Dendritic cell treated with granulocyte-macrophage colony-stimulating factor and Interleukin-4, amounts not matched to agents 40 ng/mL and 50 ng/mL, for 4 days (primary cell): ENCODE measurements at regions of chr9 and their contacts with region 1.

Region 1: GRCh38 chr9:15416880-15417279 is 5.8 kb upstream of the SNAPC3 start:
- H3K4me3 Mint-ChIP-seq: no peak overlapping the region
- H3K27ac Mint-ChIP-seq: no peak overlapping the region
- H3K4me1 Mint-ChIP-seq: no peaks in the 10 kb centered on the region
- H3K27me3 Mint-ChIP-seq: no peaks in the 10 kb centered on the region

Region 2: GRCh38 chr9:15211160-15211814 is 205.6 kb before region 1 on chr9:
- intact Hi-C with region 1: loop called (anchors 1 kb)
- H3K4me3 Mint-ChIP-seq: no peak overlapping the region
- H3K27ac Mint-ChIP-seq: no peak overlapping the region
- H3K4me1 Mint-ChIP-seq: no peaks in the 10 kb centered on the region
- H3K27me3 Mint-ChIP-seq: no peaks in the 10 kb centered on the region

Region 3: GRCh38 chr9:15277400-15278090 is 139.3 kb before region 1 on chr9:
- intact Hi-C with region 1: loop called (anchors 5 kb)
- H3K4me3 Mint-ChIP-seq: no peak overlapping the region
- H3K27ac Mint-ChIP-seq: no peak overlapping the region
- H3K4me1 Mint-ChIP-seq: no peaks in the 10 kb centered on the region
- H3K27me3 Mint-ChIP-seq: no peaks in the 10 kb centered on the region